CD4-positive, alpha-beta memory T cell (primary cell): ENCODE measurements at regions of chr14 and their contacts with region 1.

Region 1: DNA sequence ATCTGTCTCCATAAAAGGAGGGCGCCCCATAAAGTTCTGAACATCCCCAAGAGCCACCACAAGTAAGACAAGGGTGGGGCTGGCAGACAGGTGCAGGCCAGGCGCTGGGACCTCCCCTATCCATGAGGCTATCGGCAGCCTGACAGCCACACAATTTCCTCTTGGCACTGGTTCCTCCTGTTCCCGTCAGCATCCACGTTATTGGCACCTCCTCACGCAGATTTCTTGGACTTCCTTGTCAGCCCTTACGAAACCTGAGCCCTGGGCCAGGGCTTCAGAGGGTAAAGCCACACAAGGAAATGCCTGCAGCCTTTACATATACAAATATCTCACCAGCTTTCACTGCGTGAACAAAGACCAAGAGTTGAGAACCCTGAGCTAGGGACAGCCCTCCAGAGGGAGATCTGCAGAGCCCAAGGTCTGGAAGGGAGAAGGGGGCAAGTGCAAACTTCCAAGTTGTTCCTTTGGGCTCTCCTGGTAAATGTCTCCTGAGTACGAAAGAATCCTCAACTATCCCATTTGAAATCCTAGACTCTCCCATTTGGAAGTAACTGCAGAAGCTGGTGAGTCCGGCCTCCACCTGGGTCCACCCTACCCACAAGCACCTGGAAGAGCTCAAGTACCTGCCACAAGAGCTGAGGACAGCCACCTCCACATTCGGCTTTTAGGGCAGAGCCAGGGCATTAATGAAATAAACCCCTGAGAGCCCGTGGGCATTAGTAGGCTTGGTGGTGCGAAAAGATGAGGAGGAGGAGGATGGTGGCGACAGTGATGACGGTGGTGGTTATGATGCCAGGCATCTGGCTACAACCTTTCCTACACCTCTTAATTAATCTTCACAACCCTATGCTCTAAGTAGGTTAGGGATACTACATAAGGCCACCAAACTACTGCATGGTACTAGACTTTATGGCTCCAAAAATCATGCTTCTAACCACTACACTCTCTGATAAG is 5.5 kb upstream of the TC2N start:
- DNase-seq: peak; percentile 69 to 78 (median 72)
- H3K4me3 ChIP-seq: peak overlapping the region; percentile 45 to 58
- H3K4me3 Mint-ChIP-seq: peak overlapping the region; percentile 80 to 93 (median 88)
- H3K27ac ChIP-seq: peak overlapping the region; percentile 79
- H3K27ac Mint-ChIP-seq: peak overlapping the region; percentile 93 to 100 (median 97)
- H3K4me1 ChIP-seq: peaks cover 96% of the 10 kb centered on the region
- H3K4me1 Mint-ChIP-seq: peaks cover 62 to 100% (median 89%) of the 10 kb centered on the region in 4 donors
- H3K27me3 ChIP-seq: no peaks in the 10 kb centered on the region
- H3K27me3 Mint-ChIP-seq: no peaks in the 10 kb centered on the region

Region 2: DNA sequence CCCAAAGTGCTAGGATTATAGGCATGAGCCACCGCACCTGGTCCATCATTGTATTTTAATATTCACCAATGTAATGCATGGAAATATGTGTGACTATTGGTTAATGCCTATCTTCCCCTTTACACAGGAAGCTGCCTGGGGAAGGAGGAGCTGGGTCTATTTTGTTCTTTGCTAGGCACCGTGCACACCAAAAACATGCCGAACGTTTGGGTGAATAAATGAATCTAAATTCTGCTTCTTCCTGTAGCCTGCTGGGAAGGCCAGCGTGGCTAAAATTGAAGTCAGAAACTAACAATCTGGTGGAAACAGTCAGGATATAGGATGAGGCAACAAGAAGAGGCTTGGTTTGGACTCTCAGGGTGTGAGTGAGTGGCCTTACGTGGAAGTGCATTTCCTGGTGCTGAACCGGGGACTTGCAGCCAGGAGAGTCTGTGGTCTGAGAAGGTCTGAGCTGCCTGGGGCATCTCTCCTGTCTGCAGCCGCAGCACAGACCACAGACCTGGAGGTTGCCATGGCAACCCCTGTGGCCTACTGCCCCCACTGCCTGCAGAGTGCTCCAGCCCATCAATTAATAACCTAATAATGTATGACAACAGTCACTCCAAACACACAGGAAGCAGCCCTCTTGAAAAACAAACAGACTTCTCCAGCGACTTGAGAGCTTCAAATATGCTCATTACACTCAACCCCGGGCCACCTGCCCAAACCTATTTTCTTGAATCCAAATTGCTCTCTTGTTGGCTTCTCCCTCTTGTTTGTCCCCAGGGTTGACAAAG is 622.8 kb before region 1 on chr14:
- CTCF ChIA-PET with region 1: no interaction called
- POLR2A ChIA-PET with region 1: interaction called, 3 read pairs
- intact Hi-C with region 1: loop called (anchors 5 kb)
- DNase-seq: peak; percentile 41 to 72 (median 53)
- H3K4me3 ChIP-seq: peak overlapping the region in 1 of 2 donors; percentile 25
- H3K4me3 Mint-ChIP-seq: peak overlapping the region; percentile 61 to 75 (median 68)
- H3K27ac ChIP-seq: peak overlapping the region; percentile 75
- H3K27ac Mint-ChIP-seq: peak overlapping the region; percentile 92 to 99 (median 97)
- H3K4me1 ChIP-seq: peaks cover 95% of the 10 kb centered on the region
- H3K4me1 Mint-ChIP-seq: peaks cover 64 to 90% (median 80%) of the 10 kb centered on the region in 4 donors
- H3K27me3 ChIP-seq: no peaks in the 10 kb centered on the region
- H3K27me3 Mint-ChIP-seq: no peaks in the 10 kb centered on the region

Region 3: GRCh38 chr14:91510174-91511042 is 362.4 kb before region 1 on chr14 and contains the start of gene PPP4R3A:
- CTCF ChIA-PET with region 1: no interaction called
- POLR2A ChIA-PET with region 1: interaction called, 14 read pairs
- intact Hi-C with region 1: no loop called
- DNase-seq: peak; percentile 93 to 95 (median 95)
- H3K4me3 ChIP-seq: peak within 1 kb of the TSS; percentile 59 to 88
- H3K4me3 Mint-ChIP-seq: peak within 1 kb of the TSS; percentile 97 to 100 (median 100)
- H3K27ac ChIP-seq: peak within 1 kb of the TSS; percentile 99
- H3K27ac Mint-ChIP-seq: peak within 1 kb of the TSS; percentile 99 to 100 (median 100)
- H3K4me1 ChIP-seq: peaks cover 37% of the 10 kb centered on the region
- H3K4me1 Mint-ChIP-seq: peaks cover 21 to 44% (median 29%) of the 10 kb centered on the region in 4 donors
- H3K27me3 ChIP-seq: no peaks in the 10 kb centered on the region
- H3K27me3 Mint-ChIP-seq: no peaks in the 10 kb centered on the region
- total RNA-seq, gene PPP4R3A: 162 to 169 TPM

Region 4: GRCh38 chr14:91774140-91775096 is 98.4 kb before region 1 on chr14:
- CTCF ChIA-PET with region 1: no interaction called
- POLR2A ChIA-PET with region 1: no interaction called
- intact Hi-C with region 1: no loop called
- DNase-seq: no peak
- H3K4me3 ChIP-seq: no peak overlapping the region
- H3K4me3 Mint-ChIP-seq: no peak overlapping the region
- H3K27ac ChIP-seq: no peak overlapping the region
- H3K27ac Mint-ChIP-seq: peak overlapping the region in 6 of 7 donors; percentile 36 to 85 (median 46)
- H3K4me1 ChIP-seq: no peaks in the 10 kb centered on the region
- H3K4me1 Mint-ChIP-seq: peaks cover 16 to 20% (median 16%) of the 10 kb centered on the region in 4 donors
- H3K27me3 ChIP-seq: no peaks in the 10 kb centered on the region
- H3K27me3 Mint-ChIP-seq: no peaks in the 10 kb centered on the region

Region 5: DNA sequence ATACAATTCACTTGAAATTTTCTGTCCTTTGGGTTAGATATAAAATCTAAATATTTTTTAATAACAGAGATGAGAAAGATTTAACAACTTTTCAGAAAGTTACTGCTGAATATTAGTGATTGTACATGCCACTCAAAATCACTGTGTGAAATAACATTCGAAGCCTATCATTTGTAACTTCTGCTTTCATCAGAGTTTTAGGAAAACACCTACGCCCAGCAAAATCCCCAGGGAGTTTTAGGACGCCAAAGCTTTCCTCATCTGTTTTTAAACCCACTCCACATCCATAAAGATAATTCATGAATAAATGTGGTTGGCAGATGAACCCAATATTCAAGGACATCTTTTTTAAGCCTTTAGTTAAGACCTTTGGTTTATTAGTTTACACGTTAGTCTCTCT is 29.4 kb before region 1 on chr14:
- CTCF ChIA-PET with region 1: interaction called, 4 read pairs
- POLR2A ChIA-PET with region 1: interaction called, 93 read pairs
- intact Hi-C with region 1: no loop called
- DNase-seq: no peak
- H3K4me3 ChIP-seq: no peak overlapping the region
- H3K4me3 Mint-ChIP-seq: no peak overlapping the region
- H3K27ac ChIP-seq: no peak overlapping the region
- H3K27ac Mint-ChIP-seq: peak overlapping the region in 3 of 7 donors; percentile 29 to 40 (median 32)
- H3K4me1 ChIP-seq: peaks cover 57% of the 10 kb centered on the region
- H3K4me1 Mint-ChIP-seq: peaks cover 53 to 87% (median 75%) of the 10 kb centered on the region in 4 donors
- H3K27me3 ChIP-seq: no peaks in the 10 kb centered on the region
- H3K27me3 Mint-ChIP-seq: no peaks in the 10 kb centered on the region

Region 6: DNA sequence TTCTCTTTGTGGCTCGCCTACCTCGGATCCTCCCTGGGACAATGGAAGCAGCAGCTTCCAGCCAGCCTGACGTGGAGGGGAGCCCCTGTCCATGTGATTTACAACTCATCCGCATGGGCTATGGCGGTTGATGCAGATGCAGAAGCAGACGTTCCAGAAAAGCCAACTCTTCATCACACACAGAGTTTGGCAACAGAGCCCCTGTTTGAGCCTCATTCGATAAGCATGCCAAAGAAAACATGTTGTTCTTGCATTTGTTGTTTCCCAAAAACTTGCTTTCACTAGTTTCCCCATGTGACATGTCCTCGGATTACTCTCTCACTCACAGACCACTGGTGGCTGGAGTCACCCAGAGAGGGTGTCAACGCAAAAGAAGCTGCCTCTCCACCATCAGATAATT is 11.0 kb after region 1 on chr14:
- CTCF ChIA-PET with region 1: interaction called, 46 read pairs
- POLR2A ChIA-PET with region 1: interaction called, 86 read pairs
- intact Hi-C with region 1: loop called (anchors 1 kb)
- DNase-seq: no peak
- H3K4me3 ChIP-seq: no peak overlapping the region
- H3K4me3 Mint-ChIP-seq: no peak overlapping the region
- H3K27ac ChIP-seq: no peak overlapping the region
- H3K27ac Mint-ChIP-seq: peak overlapping the region in 2 of 7 donors; percentile 5 to 35
- H3K4me1 ChIP-seq: peaks cover 18% of the 10 kb centered on the region
- H3K4me1 Mint-ChIP-seq: peaks cover 19 to 36% (median 25%) of the 10 kb centered on the region in 4 donors
- H3K27me3 ChIP-seq: no peaks in the 10 kb centered on the region
- H3K27me3 Mint-ChIP-seq: peaks cover 0 to 2% of the 10 kb centered on the region in 2 donors

Region 7: DNA sequence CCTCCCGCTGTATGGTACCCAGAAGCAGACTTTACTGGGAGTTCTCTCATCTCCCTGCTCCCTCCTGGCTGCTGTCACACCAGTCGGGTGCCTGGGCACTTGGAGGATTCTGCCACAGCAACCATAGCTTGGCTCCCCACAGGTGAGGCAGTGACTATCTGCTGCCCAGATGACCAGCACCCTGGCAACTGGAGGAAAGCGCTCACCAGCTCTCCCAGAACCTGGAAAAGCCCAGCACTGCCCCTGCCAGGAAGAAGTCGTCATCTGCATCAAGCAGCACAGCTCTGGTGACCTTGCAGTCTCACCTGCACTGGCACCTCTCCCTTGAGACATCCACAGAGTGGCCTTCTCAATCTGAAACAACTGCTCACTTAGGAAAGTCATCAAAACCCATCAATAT is 26.4 kb after region 1 on chr14:
- CTCF ChIA-PET with region 1: interaction called, 3 read pairs
- POLR2A ChIA-PET with region 1: interaction called, 86 read pairs
- intact Hi-C with region 1: no loop called
- DNase-seq: no peak
- H3K4me3 ChIP-seq: no peak overlapping the region
- H3K4me3 Mint-ChIP-seq: no peak overlapping the region
- H3K27ac ChIP-seq: no peak overlapping the region
- H3K27ac Mint-ChIP-seq: peak overlapping the region in 1 of 7 donors; percentile 25
- H3K4me1 ChIP-seq: peaks cover under 1% of the 10 kb centered on the region
- H3K4me1 Mint-ChIP-seq: peaks cover 0 to 13% (median 6%) of the 10 kb centered on the region in 4 donors
- H3K27me3 ChIP-seq: no peaks in the 10 kb centered on the region
- H3K27me3 Mint-ChIP-seq: no peaks in the 10 kb centered on the region

Region 8: DNA sequence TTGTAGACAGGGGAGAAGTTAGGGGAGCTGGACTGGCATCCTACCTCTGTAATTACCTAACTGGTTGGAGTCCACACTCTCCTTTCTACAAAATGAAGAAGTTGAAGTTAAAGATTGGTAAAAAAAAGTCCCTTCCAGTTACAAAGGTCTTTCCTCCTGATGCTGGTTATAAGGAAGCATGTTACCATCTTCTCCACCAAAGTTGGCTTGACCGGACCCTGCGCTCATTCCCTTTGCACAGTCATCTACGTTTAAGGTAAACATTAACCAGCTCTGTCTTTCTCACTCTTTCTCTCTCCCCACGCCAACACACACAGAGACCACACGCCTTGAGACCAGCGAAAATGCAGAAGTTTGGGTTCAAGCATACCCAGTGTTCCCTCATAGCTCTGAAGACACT is 62.8 kb after region 1 on chr14:
- CTCF ChIA-PET with region 1: no interaction called
- POLR2A ChIA-PET with region 1: no interaction called
- intact Hi-C with region 1: no loop called
- DNase-seq: no peak
- H3K4me3 ChIP-seq: no peak overlapping the region
- H3K4me3 Mint-ChIP-seq: no peak overlapping the region
- H3K27ac ChIP-seq: no peak overlapping the region
- H3K27ac Mint-ChIP-seq: no peak overlapping the region
- H3K4me1 ChIP-seq: no peaks in the 10 kb centered on the region
- H3K4me1 Mint-ChIP-seq: peaks cover 0 to 1% (median 0%) of the 10 kb centered on the region in 4 donors
- H3K27me3 ChIP-seq: no peaks in the 10 kb centered on the region
- H3K27me3 Mint-ChIP-seq: peaks cover 2 to 5% of the 10 kb centered on the region in 2 donors